ENCODE measurements at regions of chr4 and their contacts with region 1.

Region 1: DNA sequence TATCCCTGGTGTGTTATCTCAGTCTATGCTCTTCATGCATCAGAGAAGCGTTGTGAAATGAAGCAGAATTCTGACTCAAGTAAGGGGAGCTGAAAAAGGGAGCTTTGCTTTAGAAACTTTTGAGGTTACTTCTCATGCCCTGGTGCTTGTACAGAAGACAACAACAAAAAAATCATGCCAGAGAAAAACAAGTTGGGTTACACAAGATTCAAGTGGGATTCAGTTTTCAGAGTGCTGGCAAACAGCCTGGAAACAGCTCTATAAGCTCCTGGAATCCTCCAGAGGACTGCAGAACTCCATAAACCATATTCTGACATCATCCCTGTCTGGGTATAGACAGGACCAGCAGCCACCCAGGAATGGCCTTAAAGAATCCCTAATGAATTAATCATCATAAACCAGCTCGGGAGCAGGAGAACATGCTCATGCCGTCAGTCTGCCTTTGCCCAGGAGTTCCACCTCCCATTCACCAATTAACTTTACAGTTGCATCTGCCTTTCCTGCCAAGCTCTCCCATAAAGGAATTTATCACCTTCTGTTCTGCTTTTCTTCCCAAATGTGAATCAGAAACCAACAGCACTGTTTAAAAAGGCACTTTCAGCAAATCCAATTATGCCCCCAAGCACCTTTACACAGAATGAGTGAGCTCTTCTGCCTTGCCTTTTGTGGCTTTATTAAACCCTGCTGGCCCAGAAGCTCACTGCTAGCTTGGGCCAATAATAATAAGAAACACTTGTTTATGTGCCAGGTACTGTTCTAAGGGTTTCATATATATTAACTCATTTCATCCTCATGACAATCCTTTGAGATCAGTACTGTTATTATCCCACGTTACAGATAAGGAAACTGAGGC is 54.5 kb upstream of the FBXW7 start:
- DNase-seq: peak; percentile 44 to 76
- H3K4me3 ChIP-seq: no peak overlapping the region
- H3K27ac ChIP-seq: no peak overlapping the region
- H3K4me1 ChIP-seq: peaks cover 16% of the 10 kb centered on the region; the same call in 1 of the 2 replicates
- H3K27me3 ChIP-seq: no peaks in the 10 kb centered on the region
- CTCF ChIP-seq: no peak

Region 2: DNA sequence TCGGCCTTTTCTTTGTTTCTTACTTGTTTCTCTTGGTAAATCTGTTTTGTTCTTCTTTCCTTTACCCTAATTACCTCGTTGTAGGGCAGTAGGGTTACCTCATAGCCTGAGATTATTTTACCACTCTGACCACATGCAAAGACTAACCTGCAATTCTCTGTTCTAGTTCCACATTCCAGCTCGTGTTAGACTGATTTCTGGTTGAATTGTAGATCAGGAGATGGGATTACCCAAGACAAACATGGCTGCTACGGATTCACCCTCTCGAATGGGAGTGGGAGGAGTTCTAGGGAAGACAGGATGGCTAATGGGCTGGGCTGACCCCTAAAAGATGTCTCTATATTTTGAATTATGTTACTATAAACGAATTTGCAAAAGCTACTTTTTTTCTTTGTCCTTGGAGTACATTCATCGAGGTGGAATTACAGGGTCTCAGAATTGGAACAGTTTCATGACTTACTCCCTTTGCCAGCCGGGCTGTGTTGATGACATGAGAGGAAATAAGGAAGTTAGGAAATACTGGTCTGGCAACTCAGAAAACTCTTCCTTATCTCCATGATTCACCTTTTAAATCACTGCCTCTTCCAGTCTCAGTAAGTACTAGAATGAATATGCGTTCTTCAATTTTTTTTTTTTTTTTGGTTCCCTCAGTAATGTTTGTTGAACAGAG is 17.9 kb before region 1 on chr4:
- CTCF ChIA-PET with region 1: no interaction called
- POLR2A ChIA-PET with region 1: interaction called, 5 read pairs
- intact Hi-C with region 1: loop called (anchors 1 kb)
- DNase-seq: peak; percentile 18 to 92
- H3K4me3 ChIP-seq: peak overlapping the region; percentile 50; the same call in 1 of the 2 replicates
- H3K27ac ChIP-seq: peak overlapping the region; percentile 94
- H3K4me1 ChIP-seq: peaks cover 28% of the 10 kb centered on the region
- H3K27me3 ChIP-seq: no peaks in the 10 kb centered on the region
- CTCF ChIP-seq: no peak

Measured in PC-9 (cell line).